Right ventricle myocardium inferior (tissue), 1 donor: ENCODE measurements at regions of chr13 and their contacts with region 1.

Region 1: GRCh38 chr13:98977568-98978265 is at the start of gene DOCK9:
- DNase-seq: peak; percentile 84
- ATAC-seq: peak; percentile 95
- total RNA-seq, gene DOCK9: 34.9 TPM

Region 2: GRCh38 chr13:99004978-99005377 is 27.3 kb after region 1 on chr13:
- intact Hi-C with region 1: loop called (anchors 2 kb)
- DNase-seq: no peak
- ATAC-seq: no peak